CD4-positive, alpha-beta T cell (primary cell): ENCODE measurements at regions of chr12 and their contacts with region 1.

Region 1: DNA sequence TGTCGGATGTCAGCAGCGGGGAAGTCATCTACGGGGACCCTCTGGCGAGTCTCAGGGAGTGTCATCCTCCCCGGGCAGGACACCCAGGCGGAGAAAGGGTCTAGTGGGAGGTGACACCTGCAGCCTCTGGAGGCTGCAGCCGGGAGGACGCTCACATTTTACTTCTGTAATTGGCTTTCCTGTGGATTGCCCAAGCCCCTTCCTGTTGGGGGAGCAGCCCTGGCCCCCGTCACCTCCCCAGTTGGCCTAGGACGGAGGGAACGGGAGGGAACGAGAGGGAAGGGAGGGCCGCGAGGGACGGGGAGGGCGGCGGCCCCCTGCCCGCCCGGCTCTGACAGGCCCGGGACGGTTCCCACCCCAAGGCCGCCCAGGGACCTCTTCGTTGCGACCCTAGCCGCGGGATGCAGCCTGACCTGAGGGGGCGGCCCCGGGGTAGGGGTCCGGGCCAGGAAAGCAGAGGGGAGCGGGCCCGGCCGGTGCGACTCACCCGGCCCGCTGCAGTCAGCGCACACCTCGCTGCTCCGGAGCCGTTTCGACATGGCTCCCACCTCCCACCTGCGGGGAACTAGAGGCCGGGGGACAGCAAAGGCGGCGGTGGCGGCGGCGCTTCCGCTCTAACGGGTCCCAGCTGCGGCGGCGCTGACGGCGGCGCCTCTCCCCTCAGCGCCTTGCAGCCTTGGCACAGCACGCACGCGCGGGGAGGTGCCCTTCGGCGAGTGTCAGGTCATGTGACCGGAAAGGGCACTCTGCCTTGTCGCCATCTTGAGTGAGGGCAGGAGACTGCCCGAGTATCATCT is at the start of gene GIT2:
- DNase-seq: peak; percentile 88 to 98 (median 94)
- ATAC-seq: peak; percentile 80
- H3K4me3 ChIP-seq: peak within 1 kb of the TSS; percentile 95
- H3K4me3 Mint-ChIP-seq: peak within 1 kb of the TSS; percentile 97
- H3K27ac ChIP-seq: peak within 1 kb of the TSS; percentile 85 to 92
- H3K27ac Mint-ChIP-seq: peak within 1 kb of the TSS; percentile 94
- H3K4me1 ChIP-seq: peaks cover 50% of the 10 kb centered on the region
- H3K4me1 Mint-ChIP-seq: peaks cover 71% of the 10 kb centered on the region
- H3K27me3 ChIP-seq: no peaks in the 10 kb centered on the region
- H3K27me3 Mint-ChIP-seq: no peaks in the 10 kb centered on the region
- CTCF ChIP-seq: no peak
- total RNA-seq, gene GIT2: 68.6 to 70.7 TPM

Region 2: GRCh38 chr12:109880016-109880931 is 115.6 kb before region 1 on chr12 and contains the start of gene GLTP:
- CTCF ChIA-PET with region 1: no interaction called
- POLR2A ChIA-PET with region 1: no interaction called
- intact Hi-C with region 1: loop called in 1 of 2 experiments (anchors 5 kb)
- DNase-seq: peak; percentile 78 to 97 (median 88)
- ATAC-seq: peak; percentile 96
- H3K4me3 ChIP-seq: peak within 1 kb of the TSS; percentile 98
- H3K4me3 Mint-ChIP-seq: peak within 1 kb of the TSS; percentile 92
- H3K27ac ChIP-seq: peak within 1 kb of the TSS; percentile 81 to 85
- H3K27ac Mint-ChIP-seq: peak within 1 kb of the TSS; percentile 87
- H3K4me1 ChIP-seq: peaks cover 35% of the 10 kb centered on the region
- H3K4me1 Mint-ChIP-seq: peaks cover 54% of the 10 kb centered on the region
- H3K27me3 ChIP-seq: no peaks in the 10 kb centered on the region
- H3K27me3 Mint-ChIP-seq: no peaks in the 10 kb centered on the region
- CTCF ChIP-seq: no peak
- total RNA-seq, gene GLTP: 24.8 to 25.2 TPM

Region 3: GRCh38 chr12:109981311-109981710 is 14.6 kb before region 1 on chr12:
- CTCF ChIA-PET with region 1: no interaction called
- POLR2A ChIA-PET with region 1: interaction called, 4 read pairs
- intact Hi-C with region 1: loop called in 1 of 2 experiments (anchors 1 kb)
- DNase-seq: peak in 11 of 14 experiments; percentile 5 to 80 (median 33)
- ATAC-seq: peak; percentile 98
- H3K4me3 ChIP-seq: no peak overlapping the region
- H3K4me3 Mint-ChIP-seq: peak overlapping the region; percentile 30
- H3K27ac ChIP-seq: no peak overlapping the region
- H3K27ac Mint-ChIP-seq: peak overlapping the region; percentile 80
- H3K4me1 ChIP-seq: peaks cover 26% of the 10 kb centered on the region
- H3K4me1 Mint-ChIP-seq: peaks cover 39% of the 10 kb centered on the region
- H3K27me3 ChIP-seq: no peaks in the 10 kb centered on the region
- H3K27me3 Mint-ChIP-seq: no peaks in the 10 kb centered on the region
- CTCF ChIP-seq: no peak

Region 4: GRCh38 chr12:110048242-110049027 is 52.6 kb after region 1 on chr12 and contains the start of gene C12orf76:
- CTCF ChIA-PET with region 1: no interaction called
- POLR2A ChIA-PET with region 1: no interaction called
- intact Hi-C with region 1: loop called in 1 of 2 experiments (anchors 2 kb)
- DNase-seq: peak; percentile 82 to 97 (median 90)
- ATAC-seq: peak; percentile 99
- H3K4me3 ChIP-seq: peak within 1 kb of the TSS; percentile 79
- H3K4me3 Mint-ChIP-seq: peak within 1 kb of the TSS; percentile 93
- H3K27ac ChIP-seq: peak within 1 kb of the TSS; percentile 76 to 87
- H3K27ac Mint-ChIP-seq: peak within 1 kb of the TSS; percentile 82
- H3K4me1 ChIP-seq: peaks cover 29% of the 10 kb centered on the region
- H3K4me1 Mint-ChIP-seq: peaks cover 29% of the 10 kb centered on the region
- H3K27me3 ChIP-seq: no peaks in the 10 kb centered on the region
- H3K27me3 Mint-ChIP-seq: no peaks in the 10 kb centered on the region
- CTCF ChIP-seq: no peak
- total RNA-seq, gene C12orf76: 9.8 to 12.6 TPM

Region 5: GRCh38 chr12:110124184-110124995 is 128.5 kb after region 1 on chr12 and contains the start of gene IFT81:
- CTCF ChIA-PET with region 1: no interaction called
- POLR2A ChIA-PET with region 1: interaction called, 6 read pairs
- intact Hi-C with region 1: loop called in 1 of 2 experiments (anchors 5 kb)
- DNase-seq: peak; percentile 94 to 99 (median 96)
- ATAC-seq: peak; percentile 89
- H3K4me3 ChIP-seq: peak within 1 kb of the TSS; percentile 98
- H3K4me3 Mint-ChIP-seq: peak within 1 kb of the TSS; percentile 92
- H3K27ac ChIP-seq: peak within 1 kb of the TSS; percentile 13 to 78
- H3K27ac Mint-ChIP-seq: peak within 1 kb of the TSS; percentile 63
- H3K4me1 ChIP-seq: peaks cover 12% of the 10 kb centered on the region
- H3K4me1 Mint-ChIP-seq: peaks cover 14% of the 10 kb centered on the region
- H3K27me3 ChIP-seq: no peaks in the 10 kb centered on the region
- H3K27me3 Mint-ChIP-seq: peaks cover 5% of the 10 kb centered on the region
- CTCF ChIP-seq: no peak
- total RNA-seq, gene IFT81: 0.41 to 1.1 TPM

Region 6: DNA sequence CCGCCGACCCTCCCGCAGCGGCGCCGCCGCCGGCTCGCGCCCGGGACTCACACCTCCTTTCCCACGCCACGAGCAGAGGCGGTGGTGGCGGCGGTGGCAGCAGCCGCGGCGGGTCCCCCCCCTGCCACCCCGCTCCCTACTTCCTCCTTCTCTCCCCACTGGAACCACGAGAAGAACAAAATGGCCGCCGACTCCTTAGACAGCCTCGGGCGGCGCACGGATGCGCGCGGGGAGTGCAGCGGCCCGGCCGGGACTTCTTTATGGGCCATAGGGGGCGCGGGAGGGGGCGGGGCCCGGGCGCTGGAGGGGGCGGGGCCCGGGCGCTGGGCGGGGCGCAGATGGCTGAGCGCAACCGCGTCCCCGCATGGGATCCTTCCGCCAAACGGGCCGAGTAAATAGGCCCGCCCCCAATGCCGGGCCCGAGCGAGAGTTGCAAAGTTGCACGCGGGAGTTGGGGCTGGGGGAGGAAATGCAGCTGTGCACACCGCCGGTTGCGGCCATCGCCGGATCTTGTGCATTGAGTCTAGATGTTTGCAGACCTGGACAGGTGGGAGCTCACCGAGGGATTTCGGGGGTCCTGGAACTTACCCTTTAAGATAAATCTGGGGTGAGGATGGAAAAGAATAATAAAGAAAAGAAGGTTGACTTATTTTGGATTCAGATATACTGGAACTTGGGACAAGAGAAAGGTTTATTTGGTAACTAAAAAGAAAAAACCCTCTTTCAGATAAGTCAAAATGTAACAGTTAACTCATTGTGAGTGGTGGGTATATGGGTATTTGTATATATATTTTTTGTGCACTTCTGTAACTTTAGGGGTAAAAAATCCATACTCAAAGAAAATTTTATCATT is 747.1 kb after region 1 on chr12 and contains the start of gene PPP1CC:
- CTCF ChIA-PET with region 1: no interaction called
- POLR2A ChIA-PET with region 1: no interaction called
- intact Hi-C with region 1: loop called in 1 of 2 experiments (anchors 5 kb)
- DNase-seq: peak; percentile 81 to 97 (median 90)
- ATAC-seq: peak; percentile 90
- H3K4me3 ChIP-seq: peak within 1 kb of the TSS; percentile 95
- H3K4me3 Mint-ChIP-seq: peak within 1 kb of the TSS; percentile 100
- H3K27ac ChIP-seq: peak within 1 kb of the TSS; percentile 50 to 71
- H3K27ac Mint-ChIP-seq: peak within 1 kb of the TSS; percentile 98
- H3K4me1 ChIP-seq: peaks cover 22% of the 10 kb centered on the region
- H3K4me1 Mint-ChIP-seq: peaks cover 57% of the 10 kb centered on the region
- H3K27me3 ChIP-seq: no peaks in the 10 kb centered on the region
- H3K27me3 Mint-ChIP-seq: no peaks in the 10 kb centered on the region
- CTCF ChIP-seq: no peak
- total RNA-seq, gene PPP1CC: 146 to 150 TPM